Breast epithelium (tissue), 4 donors: ENCODE measurements at regions of chr4 and their contacts with region 1.

Region 1: GRCh38 chr4:140153718-140154571 is at the start of gene MAML3:
- DNase-seq: peak; percentile 93 to 95
- H3K4me3 ChIP-seq: peak within 1 kb of the TSS; percentile 68 to 79 (median 72)
- H3K27ac ChIP-seq: peak within 1 kb of the TSS; percentile 96 to 98
- H3K4me1 ChIP-seq: peaks cover 4% of the 10 kb centered on the region in 2 donors
- H3K27me3 ChIP-seq: no peaks in the 10 kb centered on the region
- CTCF ChIP-seq: peak in 1 of 3 donors; percentile 10
- POLR2A ChIP-seq: peak; percentile 43
- total RNA-seq, gene MAML3: 5.0 to 16.8 (median 11.1) TPM

Region 2: GRCh38 chr4:139734875-139735380 is 419.0 kb before region 1 on chr4:
- intact Hi-C with region 1: loop called (anchors 5 kb)
- DNase-seq: peak; percentile 80 to 85
- H3K4me3 ChIP-seq: peak overlapping the region; percentile 45 to 75 (median 58)
- H3K27ac ChIP-seq: peak overlapping the region; percentile 88 to 95
- H3K4me1 ChIP-seq: no peaks in the 10 kb centered on the region
- H3K27me3 ChIP-seq: no peaks in the 10 kb centered on the region
- CTCF ChIP-seq: peak; percentile 68 to 78 (median 74)
- POLR2A ChIP-seq: no peak

Region 3: DNA sequence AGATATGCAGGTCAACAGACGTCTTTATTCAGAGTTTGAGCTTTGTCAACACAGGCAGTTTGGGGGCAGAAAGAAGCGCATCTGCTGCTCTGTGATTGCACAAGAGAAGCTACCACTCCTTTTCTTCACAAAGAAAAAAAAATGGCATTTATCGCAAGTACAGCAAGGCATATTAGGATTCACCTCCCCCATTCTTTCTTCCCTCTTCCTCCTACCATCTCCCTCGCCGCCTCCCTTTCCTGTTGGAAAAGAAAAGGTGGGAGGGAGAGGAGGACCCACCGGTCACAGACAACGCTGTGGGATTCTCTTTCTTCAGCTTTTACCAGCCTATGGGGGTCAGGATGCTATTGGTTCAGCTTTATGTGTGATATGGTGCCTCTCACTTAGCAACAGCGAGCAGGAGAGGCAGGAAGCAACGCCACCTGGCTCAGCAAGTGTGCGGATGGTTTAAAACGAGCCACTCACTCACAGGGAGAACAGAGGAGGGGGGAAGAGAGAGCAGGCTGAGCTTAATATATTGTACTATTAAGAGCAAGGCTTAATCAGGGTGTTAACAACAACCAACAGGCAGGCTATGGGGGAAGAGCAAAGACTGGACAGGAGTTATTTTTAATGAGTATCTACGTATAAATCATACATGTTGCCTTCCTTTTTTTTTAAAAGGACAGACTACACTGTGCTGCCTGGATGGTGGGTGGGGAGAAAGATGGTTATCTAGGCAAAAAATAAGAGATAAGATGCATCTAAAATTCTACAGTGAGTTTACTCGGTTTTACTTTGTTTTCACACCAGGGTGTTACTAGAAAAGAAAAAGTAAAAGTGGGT is 104.7 kb before region 1 on chr4:
- intact Hi-C with region 1: loop called (anchors 5 kb)
- DNase-seq: peak in 1 of 2 donors; percentile 61
- H3K4me3 ChIP-seq: peak overlapping the region; percentile 37 to 61 (median 43)
- H3K27ac ChIP-seq: peak overlapping the region; percentile 83 to 87
- H3K4me1 ChIP-seq: peaks cover 0 to 6% of the 10 kb centered on the region in 2 donors
- H3K27me3 ChIP-seq: no peaks in the 10 kb centered on the region
- CTCF ChIP-seq: no peak
- POLR2A ChIP-seq: no peak

Region 4: DNA sequence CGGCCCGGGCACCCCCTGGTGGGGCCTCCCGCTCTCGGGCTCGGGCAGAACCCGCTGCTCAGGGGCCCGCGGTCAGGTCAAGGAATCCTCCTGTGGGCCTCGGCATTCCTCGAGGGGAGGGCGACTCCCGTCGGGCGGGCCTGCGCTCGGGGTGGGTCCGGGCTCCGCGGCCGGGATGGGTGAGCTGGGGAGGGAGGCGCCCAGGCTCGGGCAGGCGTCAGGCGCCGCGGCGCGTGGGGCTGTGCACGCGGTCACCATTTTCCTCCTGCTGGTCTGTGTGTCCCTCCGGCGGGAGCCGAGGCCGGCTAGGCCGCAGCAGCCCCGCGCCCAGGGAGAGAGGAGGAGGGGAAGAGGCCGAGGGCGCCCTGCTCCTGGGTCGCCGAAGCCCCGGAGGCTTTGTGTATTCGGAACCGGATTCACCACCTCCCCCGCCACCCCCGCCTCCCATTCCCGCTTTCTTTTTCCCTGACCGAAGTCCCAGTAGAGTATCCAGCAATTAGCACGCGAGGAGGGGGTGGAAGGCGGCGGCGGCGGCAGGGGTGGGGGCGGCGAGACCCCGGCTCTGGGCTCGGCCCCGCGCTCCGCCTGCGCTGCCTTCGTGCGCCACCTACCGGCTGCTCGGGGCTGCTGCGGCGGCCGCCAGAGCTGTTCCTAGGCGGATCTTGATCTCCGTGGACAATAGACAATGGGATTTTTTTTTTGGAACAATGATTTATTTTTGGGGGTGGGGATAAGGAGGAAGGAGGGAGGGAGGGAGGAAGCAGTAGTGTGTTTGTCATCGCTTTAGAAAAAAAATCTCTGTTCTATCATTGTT is 99.0 kb after region 1 on chr4:
- intact Hi-C with region 1: loop called (anchors 2 kb)
- DNase-seq: peak; percentile 58 to 72
- H3K4me3 ChIP-seq: peak overlapping the region; percentile 62 to 93 (median 73)
- H3K27ac ChIP-seq: peak overlapping the region; percentile 96 to 99
- H3K4me1 ChIP-seq: peaks cover 0 to 4% of the 10 kb centered on the region in 2 donors
- H3K27me3 ChIP-seq: no peaks in the 10 kb centered on the region
- CTCF ChIP-seq: peak; percentile 60 to 84 (median 67)
- POLR2A ChIP-seq: no peak